PC-9 (cell line): ENCODE measurements at regions of chr1 and their contacts with region 1.

Region 1: DNA sequence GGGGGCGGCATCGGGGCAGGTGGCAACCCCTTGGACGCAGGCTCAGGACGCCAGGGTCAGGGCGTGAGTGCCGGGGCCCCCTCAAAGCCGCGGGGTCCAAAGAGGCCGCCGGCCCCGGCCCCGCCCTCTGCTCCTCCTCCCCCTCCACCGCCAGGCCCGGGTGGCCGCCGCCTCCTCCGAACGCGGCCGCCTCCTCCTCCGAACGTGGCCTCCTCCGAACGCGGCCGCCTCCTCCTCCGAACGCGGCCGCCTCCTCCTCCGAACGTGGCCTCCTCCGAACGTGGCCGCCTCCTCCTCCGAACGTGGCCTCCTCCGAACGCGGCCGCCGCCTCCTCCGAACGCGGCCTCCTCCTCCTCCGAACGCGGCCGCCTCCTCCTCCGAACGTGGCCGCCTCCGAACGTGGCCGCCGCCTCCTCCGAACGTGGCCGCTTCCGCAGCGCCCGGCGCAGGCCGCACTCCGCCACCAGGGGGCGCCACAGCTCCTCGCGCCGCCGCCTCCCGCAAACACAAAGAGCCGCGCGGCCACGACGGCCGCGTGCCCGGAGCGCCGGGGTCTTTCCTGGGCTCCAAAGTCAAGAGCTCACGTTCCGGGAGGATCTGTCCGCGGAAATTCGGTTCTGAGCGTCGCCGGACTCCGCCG is 19.3 kb upstream of the SAMD11 start:
- DNase-seq: peak; percentile 53 to 89
- H3K4me3 ChIP-seq: peak overlapping the region; percentile 40; the same call in 1 of the 2 replicates
- H3K27ac ChIP-seq: no peak overlapping the region
- H3K4me1 ChIP-seq: peaks cover 14% of the 10 kb centered on the region
- H3K27me3 ChIP-seq: peaks cover 3% of the 10 kb centered on the region; the same call in 1 of the 2 replicates
- CTCF ChIP-seq: peak; percentile 79

Region 2: GRCh38 chr1:938088-938683 is 33.8 kb after region 1 on chr1:
- CTCF ChIA-PET with region 1: interaction called, 17 read pairs
- POLR2A ChIA-PET with region 1: no interaction called
- intact Hi-C with region 1: loop called (anchors 1 kb)
- DNase-seq: peak; percentile 58 to 67
- H3K4me3 ChIP-seq: no peak overlapping the region
- H3K27ac ChIP-seq: no peak overlapping the region
- H3K4me1 ChIP-seq: peaks cover 42% of the 10 kb centered on the region
- H3K27me3 ChIP-seq: peaks cover 46% of the 10 kb centered on the region
- CTCF ChIP-seq: peak; percentile 63; the same call in 1 of the 2 replicates

Region 3: DNA sequence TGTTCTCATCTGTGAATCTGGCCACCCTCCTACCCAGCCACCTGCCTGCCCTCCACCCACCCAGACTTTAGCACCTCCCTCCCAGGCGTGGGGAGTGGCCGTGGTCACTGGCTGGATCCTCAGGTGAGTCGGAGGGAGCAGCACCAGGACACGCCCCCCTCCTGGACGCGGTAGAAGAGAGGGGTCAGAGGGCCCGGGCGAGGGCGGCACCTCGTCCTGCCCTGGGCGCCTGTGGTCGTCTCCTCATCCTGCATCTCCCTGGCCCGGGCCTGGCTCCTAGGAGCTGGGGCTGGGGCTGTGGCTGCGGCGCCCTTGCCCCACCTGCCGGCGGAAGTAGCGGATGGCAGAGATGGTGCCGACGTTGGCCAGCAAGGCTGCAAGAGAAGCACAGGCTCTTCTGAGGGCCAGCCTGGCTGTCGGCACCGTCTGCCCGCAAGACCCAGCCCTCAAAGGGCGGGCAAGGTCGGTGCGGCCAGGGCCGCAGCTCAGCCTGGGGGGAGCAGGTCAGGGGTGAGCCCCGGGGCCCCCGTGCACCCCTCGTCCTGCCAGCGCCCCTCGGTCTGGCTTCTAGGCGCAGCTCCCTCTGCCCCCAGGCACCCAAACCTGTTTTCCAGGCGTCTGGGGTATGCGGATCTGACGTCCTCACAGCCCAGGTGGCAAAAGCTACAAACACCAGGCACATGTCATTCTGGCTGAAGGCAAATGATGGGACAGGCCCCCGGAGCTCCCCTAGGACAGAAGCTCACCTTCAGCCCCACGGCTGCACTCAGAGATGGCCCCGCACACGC is 71.7 kb after region 1 on chr1:
- CTCF ChIA-PET with region 1: interaction called, 5 read pairs
- POLR2A ChIA-PET with region 1: no interaction called
- intact Hi-C with region 1: loop called (anchors 2 kb)
- DNase-seq: peak; percentile 89
- H3K4me3 ChIP-seq: peak overlapping the region; percentile 62; the same call in 1 of the 2 replicates
- H3K27ac ChIP-seq: peak overlapping the region; percentile 59
- H3K4me1 ChIP-seq: peaks cover 13% of the 10 kb centered on the region
- H3K27me3 ChIP-seq: no peaks in the 10 kb centered on the region
- CTCF ChIP-seq: peak; percentile 83

Region 4: DNA sequence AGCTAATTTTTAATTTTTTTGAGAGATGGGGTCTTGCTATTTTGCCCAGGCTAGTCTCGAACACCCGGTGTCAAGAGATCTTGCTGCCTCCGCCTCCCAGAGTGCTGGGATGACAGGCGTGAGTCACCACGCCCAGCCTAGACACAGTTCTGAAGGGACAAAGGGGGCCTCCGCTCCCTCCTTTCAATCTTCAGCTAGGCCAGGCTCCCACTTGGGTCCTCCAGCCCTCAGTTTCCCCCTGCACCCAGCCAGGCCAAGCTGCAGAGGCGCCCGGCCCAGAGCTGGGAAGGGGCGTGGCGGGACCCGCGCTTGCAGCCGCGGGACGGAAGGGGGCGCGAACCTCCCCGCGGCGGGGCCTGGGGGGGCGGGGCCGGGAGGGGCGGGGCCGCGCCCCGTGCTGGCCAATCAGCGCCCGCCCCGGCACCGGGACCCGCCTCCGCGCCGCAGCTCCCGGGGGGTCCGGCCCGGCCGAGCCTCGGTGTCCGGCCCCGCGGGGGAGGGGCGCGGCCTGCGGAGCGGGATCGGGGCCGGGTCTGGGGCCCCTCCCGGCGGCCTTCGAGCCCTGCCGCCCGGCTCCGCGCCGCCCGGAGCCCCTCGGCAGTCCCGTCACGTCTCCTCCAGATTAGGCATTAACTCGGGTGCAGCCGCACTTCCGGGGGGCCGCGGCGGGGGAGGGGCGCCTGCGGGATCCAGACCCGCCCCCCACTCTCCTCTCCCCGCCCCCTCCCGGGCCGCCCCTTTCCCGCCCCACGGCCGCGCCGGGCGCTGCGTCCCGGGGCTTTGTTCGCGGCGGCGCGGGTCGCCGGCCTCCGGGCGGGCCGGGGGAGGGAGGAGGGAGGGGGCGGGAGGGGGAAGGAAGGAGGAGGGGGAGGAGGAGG is 114.9 kb after region 1 on chr1:
- CTCF ChIA-PET with region 1: no interaction called
- POLR2A ChIA-PET with region 1: no interaction called
- intact Hi-C with region 1: no loop called
- DNase-seq: peak; percentile 63 to 88
- H3K4me3 ChIP-seq: peak overlapping the region; percentile 29; the same call in 1 of the 2 replicates
- H3K27ac ChIP-seq: no peak overlapping the region
- H3K4me1 ChIP-seq: peaks cover 26% of the 10 kb centered on the region
- H3K27me3 ChIP-seq: no peaks in the 10 kb centered on the region
- CTCF ChIP-seq: peak; percentile 63

Region 5: DNA sequence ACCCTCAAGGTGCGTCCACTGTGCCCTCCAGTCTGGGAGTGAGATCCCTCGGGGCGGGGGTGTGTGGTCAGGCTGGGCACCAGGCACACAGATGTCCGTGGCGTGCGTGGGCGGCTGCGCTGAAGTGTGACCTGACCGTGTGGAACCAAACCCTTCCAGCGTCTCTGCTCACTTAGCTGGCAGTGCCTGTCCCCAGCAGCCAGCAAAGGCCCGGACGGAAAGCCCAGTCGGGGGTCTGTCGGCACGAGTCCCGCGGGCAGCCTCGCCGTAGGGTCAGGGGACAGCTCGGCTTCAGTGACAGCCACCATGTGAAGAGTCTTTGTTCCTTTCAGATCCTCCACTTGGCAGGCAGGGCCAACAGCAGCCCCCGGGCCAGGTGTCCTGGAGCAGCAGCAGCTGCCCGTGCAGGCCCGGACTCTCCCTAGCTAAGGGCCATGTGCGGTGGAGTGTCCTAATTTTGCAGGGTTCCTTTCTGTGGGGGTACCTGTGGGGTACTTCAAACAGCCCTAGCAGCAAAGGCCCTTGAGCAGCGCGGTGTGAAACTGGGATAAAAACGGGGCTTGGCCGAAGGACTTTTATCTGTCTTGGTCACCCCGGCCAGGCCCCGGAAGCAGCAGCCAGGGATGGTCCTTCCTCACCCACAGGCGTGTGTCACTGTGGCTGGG is 280.8 kb after region 1 on chr1:
- CTCF ChIA-PET with region 1: no interaction called
- POLR2A ChIA-PET with region 1: no interaction called
- intact Hi-C with region 1: no loop called
- DNase-seq: no peak
- H3K4me3 ChIP-seq: no peak overlapping the region
- H3K27ac ChIP-seq: no peak overlapping the region
- H3K4me1 ChIP-seq: peaks cover 3% of the 10 kb centered on the region; the same call in 1 of the 2 replicates
- H3K27me3 ChIP-seq: no peaks in the 10 kb centered on the region
- CTCF ChIP-seq: no peak